Colonic mucosa (tissue), 4 donors: ENCODE measurements at regions of chr7 and their contacts with region 1.

Region 1: DNA sequence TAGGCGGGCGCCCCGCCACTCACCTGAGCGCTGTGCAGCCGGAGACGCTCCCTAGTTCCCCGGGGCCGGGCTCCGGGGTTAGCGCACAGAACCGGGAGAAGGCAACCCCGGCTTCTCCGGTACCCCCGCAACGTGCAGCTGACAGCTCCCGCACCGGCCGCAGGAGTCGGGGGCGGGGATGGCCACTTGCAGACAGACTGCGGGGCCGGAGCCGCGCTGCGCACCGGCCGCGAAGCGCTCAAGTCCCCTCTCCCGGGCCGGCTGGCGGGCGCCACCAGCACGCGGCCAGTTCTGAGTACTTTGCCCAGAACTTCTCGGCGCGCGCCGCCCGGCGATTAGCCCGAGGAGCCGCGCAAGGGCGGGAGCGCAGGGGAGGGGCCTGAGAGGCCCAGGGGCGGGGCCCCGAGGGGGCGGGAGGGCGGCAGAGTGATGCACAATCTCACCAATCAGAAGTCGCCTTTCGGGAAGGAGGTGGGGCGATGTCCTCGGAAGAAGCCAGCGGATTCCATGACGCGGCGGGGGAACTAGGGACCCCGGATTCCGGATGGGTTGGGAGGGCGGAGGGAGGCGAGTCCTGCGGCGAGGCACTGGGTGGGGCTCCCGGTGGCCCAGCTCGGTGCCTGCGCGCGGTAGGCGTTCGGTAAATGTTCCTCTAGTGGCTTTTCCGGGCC is at the start of gene OSBPL3:
- DNase-seq: peak; percentile 97
- H3K4me3 ChIP-seq: peak within 1 kb of the TSS; percentile 64
- H3K27ac ChIP-seq: peak within 1 kb of the TSS; percentile 88
- H3K4me1 ChIP-seq: no peaks in the 10 kb centered on the region
- H3K27me3 ChIP-seq: no peaks in the 10 kb centered on the region
- CTCF ChIP-seq: no peak
- total RNA-seq, gene OSBPL3: 9.0 to 14.8 TPM

Region 2: GRCh38 chr7:24819916-24820689 is 159.9 kb before region 1 on chr7:
- intact Hi-C with region 1: loop called (anchors 5 kb)
- DNase-seq: peak; percentile 92
- H3K4me3 ChIP-seq: no peak overlapping the region
- H3K27ac ChIP-seq: peak overlapping the region; percentile 68
- H3K4me1 ChIP-seq: peaks cover 5% of the 10 kb centered on the region
- H3K27me3 ChIP-seq: no peaks in the 10 kb centered on the region
- CTCF ChIP-seq: peak; percentile 77